HEK293T (cell line): ENCODE measurements at regions of chr12 and their contacts with region 1.

Region 1: DNA sequence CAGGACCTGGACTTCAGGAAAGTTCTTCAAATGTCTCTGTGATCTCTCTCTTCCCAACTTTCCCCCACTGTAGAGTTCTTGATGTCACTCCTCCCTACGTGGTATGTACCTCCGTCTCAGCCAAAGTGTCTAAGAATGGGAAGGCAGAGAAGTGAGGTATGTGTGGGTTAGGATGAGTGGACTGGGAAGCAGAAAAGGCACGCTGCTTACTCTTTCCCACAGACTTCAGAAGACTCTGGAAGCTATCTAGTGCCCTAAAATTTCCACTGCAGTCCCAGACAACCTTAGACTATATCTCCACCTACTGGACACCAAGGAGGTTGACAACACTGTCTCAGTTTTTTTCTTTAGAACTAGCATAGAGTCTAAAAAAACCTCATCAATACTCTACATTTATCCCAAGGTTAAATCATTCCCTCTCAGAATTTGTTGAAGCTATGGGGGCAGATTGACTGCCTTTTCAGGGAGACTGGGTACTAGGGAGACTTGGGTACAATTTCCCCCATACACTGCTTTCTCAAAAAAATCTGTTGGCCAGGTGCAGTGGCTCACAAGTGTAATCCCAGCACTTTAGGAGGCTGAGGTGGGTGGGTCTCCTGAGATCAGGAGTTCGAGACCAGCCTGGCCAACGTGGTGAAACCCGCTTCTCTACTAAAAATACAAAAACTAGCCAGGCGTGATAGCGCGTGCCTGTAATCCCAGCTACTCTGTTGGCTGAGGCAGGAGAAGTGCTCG is 20.6 kb upstream of the ITGA5 start:
- DNase-seq: peak; percentile 72

Region 2: DNA sequence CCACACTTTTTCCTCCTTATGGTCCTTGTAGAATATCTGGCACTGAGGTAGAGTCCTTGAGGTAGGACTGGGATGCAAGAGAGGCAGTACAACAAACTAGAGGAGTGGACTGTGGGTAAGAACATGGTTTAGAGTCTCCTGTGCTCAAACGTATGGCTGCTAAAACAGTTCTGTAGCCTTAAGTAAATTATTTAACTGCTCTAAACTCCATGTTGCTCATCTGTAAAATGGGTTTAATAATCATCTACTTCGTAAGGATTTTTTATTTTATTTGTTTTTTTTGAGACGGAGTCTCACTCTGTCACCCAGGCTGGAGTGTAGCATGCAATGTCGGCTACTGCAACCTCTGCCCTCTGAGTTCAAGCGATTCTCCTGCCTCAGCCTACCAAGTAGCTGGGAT is 118.3 kb before region 1 on chr12:
- CTCF ChIA-PET with region 1: no interaction called
- POLR2A ChIA-PET with region 1: no interaction called
- DNase-seq: no peak

Region 3: GRCh38 chr12:54404061-54405004 is 35.4 kb before region 1 on chr12:
- CTCF ChIA-PET with region 1: interaction called, 121 read pairs
- POLR2A ChIA-PET with region 1: interaction called, 11 read pairs
- DNase-seq: peak; percentile 70

Region 4: GRCh38 chr12:54419088-54419892 is 20.4 kb before region 1 on chr12 and contains the start of gene ITGA5:
- CTCF ChIA-PET with region 1: interaction called, 13 read pairs
- POLR2A ChIA-PET with region 1: interaction called, 3 read pairs
- DNase-seq: peak; percentile 73